ENCODE measurements at regions of chr10 and their contacts with region 1.

Region 1: DNA sequence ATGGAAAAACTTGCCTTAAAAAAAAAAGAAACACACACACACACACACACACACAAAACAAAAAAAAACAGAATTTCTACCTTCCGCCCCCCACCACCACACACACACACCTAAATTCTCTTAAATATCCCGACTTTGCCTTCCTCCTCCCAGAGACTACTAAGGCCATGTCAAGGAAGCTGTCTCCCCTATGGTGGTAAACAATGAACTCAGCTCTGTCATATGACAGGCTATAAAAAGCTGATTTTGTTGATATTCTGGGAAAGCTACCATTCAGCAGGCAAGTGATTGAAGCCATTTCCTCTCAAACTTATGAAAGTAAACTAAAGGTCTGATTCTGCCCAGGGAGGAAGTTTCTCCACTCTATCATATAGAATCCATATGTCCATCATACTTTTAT is 471.0 kb downstream of the GFRA1 start:
- DNase-seq: peak; percentile 35
- H3K4me3 ChIP-seq: no peak overlapping the region
- H3K27ac ChIP-seq: no peak overlapping the region
- H3K4me1 ChIP-seq: no peaks in the 10 kb centered on the region
- H3K27me3 ChIP-seq: no peaks in the 10 kb centered on the region
- CTCF ChIP-seq: no peak
- POLR2A ChIP-seq: no peak

Region 2: DNA sequence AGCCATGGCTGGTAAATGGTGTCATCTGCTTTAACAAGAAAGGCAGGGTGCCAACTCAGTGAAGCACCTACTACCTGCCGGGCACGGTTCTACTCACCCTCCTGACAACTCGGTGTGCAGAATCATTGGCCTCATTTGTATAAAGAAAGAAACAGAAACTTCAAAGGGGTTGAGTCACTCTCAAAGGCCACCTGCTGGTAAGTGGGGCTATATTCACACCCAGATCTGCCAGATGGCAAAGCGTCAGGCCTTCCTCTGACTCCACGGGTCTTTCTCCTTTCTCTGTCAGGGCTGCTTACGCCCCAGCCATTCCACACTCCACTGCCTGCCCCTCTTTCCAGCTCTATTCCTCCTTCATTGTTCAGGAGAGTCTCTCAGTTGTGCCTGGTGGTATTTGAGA is 161.9 kb after region 1 on chr10:
- CTCF ChIA-PET with region 1: interaction called, 6 read pairs
- POLR2A ChIA-PET with region 1: no interaction called
- dilution Hi-C with region 1: no loop called
- intact Hi-C with region 1: loop called (anchors 1 kb)
- DNase-seq: no peak
- H3K4me3 ChIP-seq: no peak overlapping the region
- H3K27ac ChIP-seq: no peak overlapping the region
- H3K4me1 ChIP-seq: no peaks in the 10 kb centered on the region
- H3K27me3 ChIP-seq: no peaks in the 10 kb centered on the region
- CTCF ChIP-seq: peak; percentile 13 to 21
- POLR2A ChIP-seq: no peak

Region 3: DNA sequence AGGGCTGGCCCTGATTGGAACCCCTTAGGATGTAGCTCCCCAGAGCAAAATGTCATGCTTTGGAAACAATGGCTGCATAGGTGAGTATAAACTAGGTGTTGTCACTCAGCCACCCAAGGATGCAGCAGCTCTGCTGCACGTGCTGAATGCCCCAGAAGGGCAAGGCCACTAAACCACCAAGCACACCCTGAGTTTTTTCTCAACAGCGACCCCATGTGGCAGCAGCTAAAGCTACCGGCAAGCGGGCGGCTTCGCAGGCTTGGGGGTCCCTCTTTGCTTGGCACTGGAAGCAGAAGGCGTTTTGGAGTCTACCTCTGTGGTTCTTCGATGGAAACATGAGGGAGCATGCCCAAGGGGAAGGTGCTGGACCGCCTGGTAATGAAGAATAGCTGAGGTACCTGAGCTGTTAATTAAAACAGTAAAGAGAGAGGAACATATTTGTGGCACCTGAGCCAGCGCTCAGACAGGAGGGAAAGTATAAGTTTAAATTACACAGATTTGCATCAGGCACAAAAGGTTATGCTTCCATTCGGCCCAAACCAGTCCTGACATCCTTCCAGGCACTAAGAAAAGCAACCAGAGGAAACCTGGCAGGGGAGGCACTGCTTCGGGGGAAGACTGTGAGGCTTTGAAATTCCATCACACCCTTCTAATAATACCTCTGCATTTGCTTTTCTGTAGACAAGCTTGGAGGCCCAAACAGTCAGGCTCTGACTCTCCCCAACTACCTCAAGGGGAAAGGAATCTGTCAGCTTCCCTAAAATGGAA is 318.9 kb after region 1 on chr10:
- CTCF ChIA-PET with region 1: no interaction called
- POLR2A ChIA-PET with region 1: no interaction called
- dilution Hi-C with region 1: no loop called
- intact Hi-C with region 1: loop called (anchors 1 kb)
- DNase-seq: no peak
- H3K4me3 ChIP-seq: no peak overlapping the region
- H3K27ac ChIP-seq: no peak overlapping the region
- H3K4me1 ChIP-seq: no peaks in the 10 kb centered on the region
- H3K27me3 ChIP-seq: no peaks in the 10 kb centered on the region
- CTCF ChIP-seq: no peak
- POLR2A ChIP-seq: no peak

Region 4: GRCh38 chr10:116272440-116273283 is 470.7 kb after region 1 on chr10 and contains the start of gene GFRA1:
- CTCF ChIA-PET with region 1: interaction called, 3 read pairs
- POLR2A ChIA-PET with region 1: no interaction called
- dilution Hi-C with region 1: no loop called
- intact Hi-C with region 1: loop called (anchors 5 kb)
- DNase-seq: no peak
- H3K4me3 ChIP-seq: peak within 1 kb of the TSS in 1 of 3 experiments; percentile 4
- H3K27ac ChIP-seq: no peak within 1 kb of the TSS
- H3K4me1 ChIP-seq: peaks cover 11% of the 10 kb centered on the region
- H3K27me3 ChIP-seq: peaks cover 47 to 64% of the 10 kb centered on the region in 2 experiments
- CTCF ChIP-seq: no peak
- POLR2A ChIP-seq: no peak
- total RNA-seq, gene GFRA1: 0.88 and 0.95 TPM in 2 replicates

Region 5: DNA sequence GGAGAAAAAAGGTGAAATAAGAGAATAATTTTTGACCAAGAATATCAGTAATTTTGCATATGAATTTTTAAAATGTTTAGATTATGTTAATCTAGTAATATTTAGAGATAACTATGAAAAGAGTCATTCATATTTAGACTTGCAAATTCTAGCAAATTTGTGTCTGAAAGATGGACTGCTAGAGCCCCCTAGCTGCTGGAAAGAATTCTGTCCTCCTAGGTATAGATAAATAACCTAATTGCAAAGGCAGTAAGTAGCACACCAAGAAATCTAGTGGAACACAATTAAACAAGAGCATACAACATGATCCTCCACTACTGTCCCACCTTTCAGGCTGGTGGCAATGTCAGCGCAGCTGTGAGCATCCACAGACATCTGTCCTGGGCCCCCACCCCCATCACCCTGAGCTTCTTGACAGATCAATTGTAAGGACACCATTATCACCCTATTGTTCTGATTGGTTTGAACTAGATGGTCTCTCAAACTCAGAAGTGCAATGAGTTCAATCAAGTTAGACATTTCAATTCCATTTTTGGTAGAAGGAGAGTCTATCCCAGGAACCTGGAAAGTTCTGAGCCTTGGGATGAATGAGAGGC is 486.0 kb after region 1 on chr10:
- CTCF ChIA-PET with region 1: interaction called, 58 read pairs
- POLR2A ChIA-PET with region 1: no interaction called
- dilution Hi-C with region 1: no loop called
- intact Hi-C with region 1: loop called (anchors 1 kb)
- DNase-seq: peak; percentile 51
- H3K4me3 ChIP-seq: no peak overlapping the region
- H3K27ac ChIP-seq: no peak overlapping the region
- H3K4me1 ChIP-seq: no peaks in the 10 kb centered on the region
- H3K27me3 ChIP-seq: no peaks in the 10 kb centered on the region
- CTCF ChIP-seq: peak; percentile 36 to 42
- POLR2A ChIP-seq: no peak

Region 6: GRCh38 chr10:116385994-116386809 is 584.2 kb after region 1 on chr10:
- CTCF ChIA-PET with region 1: interaction called, 6 read pairs
- POLR2A ChIA-PET with region 1: no interaction called
- dilution Hi-C with region 1: no loop called
- intact Hi-C with region 1: loop called (anchors 1 kb)
- DNase-seq: peak; percentile 39
- H3K4me3 ChIP-seq: no peak overlapping the region
- H3K27ac ChIP-seq: no peak overlapping the region
- H3K4me1 ChIP-seq: no peaks in the 10 kb centered on the region
- H3K27me3 ChIP-seq: no peaks in the 10 kb centered on the region
- CTCF ChIP-seq: peak in 1 of 2 donors; percentile 33
- POLR2A ChIP-seq: no peak